HepG2 (cell line): ENCODE measurements at regions of chr2 and their contacts with region 1.

Region 1: GRCh38 chr2:215920244-215921100 is 92.9 kb downstream of the MREG start:
- DNase-seq: peak; percentile 81
- ATAC-seq: peak; percentile 98
- H3K4me3 ChIP-seq: no peak overlapping the region
- H3K27ac ChIP-seq: peak overlapping the region; percentile 16
- H3K4me1 ChIP-seq: peaks cover 42% of the 10 kb centered on the region
- H3K27me3 ChIP-seq: no peaks in the 10 kb centered on the region
- CTCF ChIP-seq: peak; percentile 96
- EP300 ChIP-seq: peak in 1 of 2 experiments; percentile 43; a peak in 2 of 4 replicates
- POLR2A ChIP-seq: no peak
- RAD21 ChIP-seq: peak; percentile 96

Region 2: GRCh38 chr2:215418064-215418963 is 502.2 kb before region 1 on chr2:
- CTCF ChIA-PET with region 1: no interaction called
- POLR2A ChIA-PET with region 1: no interaction called
- in situ Hi-C with region 1: no loop called
- intact Hi-C with region 1: loop called (anchors 5 kb)
- DNase-seq: peak; percentile 89
- ATAC-seq: peak; percentile 42
- H3K4me3 ChIP-seq: peak overlapping the region; percentile 3 to 31 (median 13); a peak in 2 of 6 replicates
- H3K27ac ChIP-seq: peak overlapping the region; percentile 77
- H3K4me1 ChIP-seq: peaks cover 100% of the 10 kb centered on the region
- H3K27me3 ChIP-seq: no peaks in the 10 kb centered on the region
- CTCF ChIP-seq: no peak
- EP300 ChIP-seq: peak; percentile 45 to 94; a peak in 3 of 4 replicates
- POLR2A ChIP-seq: peak in 1 of 2 experiments; percentile 28; a peak in 1 of 4 replicates
- RAD21 ChIP-seq: no peak

Region 3: GRCh38 chr2:215454519-215455246 is 465.8 kb before region 1 on chr2:
- CTCF ChIA-PET with region 1: interaction called, 9 read pairs
- POLR2A ChIA-PET with region 1: no interaction called
- in situ Hi-C with region 1: no loop called
- intact Hi-C with region 1: loop called (anchors 1 kb)
- DNase-seq: peak; percentile 52
- ATAC-seq: peak; percentile 50
- H3K4me3 ChIP-seq: no peak overlapping the region
- H3K27ac ChIP-seq: no peak overlapping the region
- H3K4me1 ChIP-seq: peaks cover 17% of the 10 kb centered on the region
- H3K27me3 ChIP-seq: no peaks in the 10 kb centered on the region
- CTCF ChIP-seq: peak; percentile 75
- EP300 ChIP-seq: peak in 1 of 2 experiments; percentile 55; a peak in 2 of 4 replicates
- POLR2A ChIP-seq: no peak
- RAD21 ChIP-seq: peak; percentile 42; the same call in 1 of the 2 replicates

Region 4: GRCh38 chr2:215624423-215624829 is 296.0 kb before region 1 on chr2:
- CTCF ChIA-PET with region 1: no interaction called
- POLR2A ChIA-PET with region 1: no interaction called
- in situ Hi-C with region 1: loop called (anchors 10 kb)
- intact Hi-C with region 1: loop called (anchors 2 kb)
- DNase-seq: peak; percentile 95
- ATAC-seq: peak; percentile 91
- H3K4me3 ChIP-seq: no peak overlapping the region
- H3K27ac ChIP-seq: peak overlapping the region; percentile 69
- H3K4me1 ChIP-seq: peaks cover 70% of the 10 kb centered on the region
- H3K27me3 ChIP-seq: no peaks in the 10 kb centered on the region
- CTCF ChIP-seq: no peak
- EP300 ChIP-seq: peak; percentile 36 to 92; a peak in 3 of 4 replicates
- POLR2A ChIP-seq: no peak; a peak in 1 of 4 replicates
- RAD21 ChIP-seq: 0 out of 2 replicates have a peak, but pooled peaks have one; percentile 15